ENCODE measurements at regions of chr12 and their contacts with region 1.

Region 1: DNA sequence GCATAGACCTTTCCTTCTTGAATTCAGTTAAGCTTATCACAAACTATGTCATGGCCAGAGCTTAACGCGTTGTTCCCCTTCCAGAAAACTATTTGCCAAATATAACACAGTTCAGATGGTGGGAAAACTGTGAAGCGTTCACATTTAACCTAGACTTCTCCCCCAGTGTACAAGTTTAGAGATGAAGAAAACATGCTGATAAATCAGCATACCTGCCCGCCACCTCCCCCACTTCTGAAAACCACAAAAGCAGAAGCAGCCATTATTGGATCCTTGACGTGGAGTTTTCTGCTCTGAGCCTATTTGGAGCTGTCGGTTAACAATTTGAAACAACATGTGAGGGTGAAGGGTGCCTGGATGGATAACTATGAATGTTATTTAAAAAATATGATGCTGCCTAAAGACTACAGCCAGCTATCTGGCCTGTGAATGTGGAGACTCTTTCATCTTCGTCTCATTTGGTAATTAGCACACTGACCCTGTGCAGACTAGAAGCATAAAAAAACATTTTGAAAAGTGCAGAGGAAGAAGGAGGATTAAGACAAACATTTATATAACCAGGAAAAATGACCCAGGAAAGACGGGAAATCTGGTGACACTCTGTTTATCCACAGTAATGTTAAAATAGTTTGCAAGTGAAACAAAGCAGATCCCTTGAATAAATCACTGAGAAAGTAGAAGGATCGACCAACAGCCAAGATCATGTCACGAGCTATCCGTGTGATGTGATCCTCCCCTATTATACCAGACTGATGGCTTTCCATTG is 408.2 kb downstream of the AEBP2 start:
- DNase-seq: no peak
- ATAC-seq: peak; percentile 83 to 87

Region 2: GRCh38 chr12:19893514-19893913 is 46.0 kb after region 1 on chr12:
- intact Hi-C with region 1: loop called in 1 of 2 experiments (anchors 5 kb)
- DNase-seq: no peak
- ATAC-seq: peak; percentile 70 to 71

Measured in left cardiac atrium (tissue), 4 donors.